Endothelial cell of umbilical vein (primary cell): ENCODE measurements at regions of chr6 and their contacts with region 1.

Region 1: DNA sequence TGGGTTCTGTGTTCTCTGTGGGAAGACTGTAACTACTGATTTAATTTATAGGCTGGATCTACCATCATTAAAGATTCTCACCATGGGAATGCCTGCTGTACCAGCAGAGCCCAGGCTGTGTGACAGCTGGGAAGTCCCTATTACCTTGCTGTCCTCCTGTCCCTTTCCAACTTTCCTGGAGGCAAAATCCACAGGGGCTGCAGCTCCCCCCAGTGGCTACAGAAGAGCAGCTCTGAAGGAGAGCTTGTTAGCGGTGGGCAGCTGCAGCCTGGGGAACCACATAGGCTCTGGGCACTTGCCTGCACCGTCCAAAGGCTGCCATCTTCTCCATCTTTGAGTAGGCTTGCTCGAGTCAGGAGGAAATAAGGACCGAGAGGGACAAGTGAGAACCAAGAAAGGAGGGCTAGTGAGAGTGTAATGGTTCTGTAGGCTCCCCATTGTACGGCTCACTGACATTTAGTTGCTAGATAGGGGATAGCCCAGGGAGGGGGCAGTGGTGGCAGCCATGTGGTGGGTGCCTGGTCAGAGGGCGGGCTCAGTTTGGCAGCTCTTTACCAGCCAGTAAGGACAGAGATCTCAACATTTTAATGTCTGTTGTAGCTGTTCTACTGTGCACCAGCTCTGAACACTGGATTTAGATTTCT is 155.1 kb upstream of the MLIP start:
- DNase-seq: peak; percentile 83
- H3K4me3 ChIP-seq: no peak overlapping the region
- H3K27ac ChIP-seq: no peak overlapping the region
- H3K4me1 ChIP-seq: no peaks in the 10 kb centered on the region
- H3K27me3 ChIP-seq: no peaks in the 10 kb centered on the region
- CTCF ChIP-seq: peak; percentile 62 to 92
- POLR2A ChIP-seq: no peak

Region 2: GRCh38 chr6:53725791-53726431 is 230.3 kb before region 1 on chr6:
- CTCF ChIA-PET with region 1: interaction called, 291 read pairs
- POLR2A ChIA-PET with region 1: no interaction called
- dilution Hi-C with region 1: no loop called
- intact Hi-C with region 1: loop called (anchors 1 kb)
- DNase-seq: peak; percentile 70
- H3K4me3 ChIP-seq: no peak overlapping the region
- H3K27ac ChIP-seq: no peak overlapping the region
- H3K4me1 ChIP-seq: no peaks in the 10 kb centered on the region
- H3K27me3 ChIP-seq: no peaks in the 10 kb centered on the region
- CTCF ChIP-seq: peak; percentile 91 to 98
- POLR2A ChIP-seq: no peak

Region 3: GRCh38 chr6:53761036-53761435 is 195.2 kb before region 1 on chr6:
- CTCF ChIA-PET with region 1: interaction called, 18 read pairs
- POLR2A ChIA-PET with region 1: no interaction called
- dilution Hi-C with region 1: no loop called
- intact Hi-C with region 1: no loop called
- DNase-seq: no peak
- H3K4me3 ChIP-seq: no peak overlapping the region
- H3K27ac ChIP-seq: no peak overlapping the region
- H3K4me1 ChIP-seq: no peaks in the 10 kb centered on the region
- H3K27me3 ChIP-seq: no peaks in the 10 kb centered on the region
- CTCF ChIP-seq: no peak
- POLR2A ChIP-seq: no peak

Region 4: GRCh38 chr6:53794720-53795253 is 161.4 kb before region 1 on chr6 and contains the start of gene LRRC1:
- CTCF ChIA-PET with region 1: interaction called, 319 read pairs
- POLR2A ChIA-PET with region 1: interaction called, 18 read pairs
- dilution Hi-C with region 1: no loop called
- intact Hi-C with region 1: loop called (anchors 1 kb)
- DNase-seq: peak; percentile 95
- H3K4me3 ChIP-seq: peak within 1 kb of the TSS; percentile 58 to 76 (median 72)
- H3K27ac ChIP-seq: peak within 1 kb of the TSS; percentile 43
- H3K4me1 ChIP-seq: peaks cover 25% of the 10 kb centered on the region
- H3K27me3 ChIP-seq: no peaks in the 10 kb centered on the region
- CTCF ChIP-seq: no peak
- POLR2A ChIP-seq: peak; percentile 83
- total RNA-seq, gene LRRC1: 10.6 and 11.7 TPM in 2 replicates

Region 5: GRCh38 chr6:53869952-53870351 is 86.2 kb before region 1 on chr6:
- CTCF ChIA-PET with region 1: interaction called, 5 read pairs
- POLR2A ChIA-PET with region 1: no interaction called
- dilution Hi-C with region 1: no loop called
- intact Hi-C with region 1: loop called (anchors 5 kb)
- DNase-seq: peak; percentile 93
- H3K4me3 ChIP-seq: no peak overlapping the region
- H3K27ac ChIP-seq: no peak overlapping the region
- H3K4me1 ChIP-seq: peaks cover 8% of the 10 kb centered on the region
- H3K27me3 ChIP-seq: no peaks in the 10 kb centered on the region
- CTCF ChIP-seq: no peak
- POLR2A ChIP-seq: no peak

Region 6: DNA sequence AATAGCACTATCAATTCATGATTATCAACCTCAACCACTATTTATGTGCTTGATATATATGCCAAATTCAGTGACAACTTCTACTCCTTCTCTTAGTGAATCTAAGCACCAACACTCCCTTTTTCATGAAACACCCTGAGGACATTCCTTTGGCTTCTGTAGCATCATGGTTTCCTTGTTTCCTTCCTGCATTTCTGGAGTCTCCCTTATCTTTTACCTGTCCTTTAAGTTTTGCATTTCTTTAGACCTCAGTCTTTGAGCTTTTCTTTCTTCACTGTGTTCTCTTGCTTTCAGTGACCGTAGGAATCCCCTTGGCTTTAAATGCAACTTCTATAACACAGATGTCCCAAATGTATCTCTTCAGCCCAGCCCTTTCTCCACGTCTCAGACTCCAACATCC is 11.2 kb after region 1 on chr6:
- CTCF ChIA-PET with region 1: interaction called, 20 read pairs
- POLR2A ChIA-PET with region 1: no interaction called
- dilution Hi-C with region 1: no loop called
- intact Hi-C with region 1: no loop called
- DNase-seq: no peak
- H3K4me3 ChIP-seq: no peak overlapping the region
- H3K27ac ChIP-seq: no peak overlapping the region
- H3K4me1 ChIP-seq: no peaks in the 10 kb centered on the region
- H3K27me3 ChIP-seq: no peaks in the 10 kb centered on the region
- CTCF ChIP-seq: no peak
- POLR2A ChIP-seq: no peak

Region 7: GRCh38 chr6:54037277-54037779 is 81.1 kb after region 1 on chr6:
- CTCF ChIA-PET with region 1: no interaction called
- POLR2A ChIA-PET with region 1: no interaction called
- dilution Hi-C with region 1: no loop called
- intact Hi-C with region 1: no loop called
- DNase-seq: no peak
- H3K4me3 ChIP-seq: no peak overlapping the region
- H3K27ac ChIP-seq: no peak overlapping the region
- H3K4me1 ChIP-seq: no peaks in the 10 kb centered on the region
- H3K27me3 ChIP-seq: no peaks in the 10 kb centered on the region
- CTCF ChIP-seq: no peak
- POLR2A ChIP-seq: no peak

Region 8: DNA sequence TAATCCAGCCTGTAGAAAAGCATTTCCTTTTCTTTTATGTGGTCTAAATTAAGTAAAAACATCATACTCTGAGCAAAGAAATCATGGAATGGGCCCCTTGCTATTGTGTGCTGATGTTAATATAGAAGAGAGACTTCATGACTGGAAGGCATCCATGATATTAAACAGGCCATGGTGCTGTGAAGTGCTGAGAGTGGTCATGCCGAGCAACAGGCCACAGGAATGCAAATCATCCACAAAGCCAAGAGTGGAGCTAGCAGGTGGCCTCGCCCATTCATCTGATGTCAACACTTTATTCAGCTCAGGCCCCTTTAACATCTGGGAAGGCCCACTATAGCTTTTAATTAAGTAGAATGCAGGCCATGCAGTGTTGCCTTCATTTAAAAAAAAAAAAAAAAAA is 1738.0 kb after region 1 on chr6:
- CTCF ChIA-PET with region 1: no interaction called
- POLR2A ChIA-PET with region 1: no interaction called
- dilution Hi-C with region 1: no loop called
- intact Hi-C with region 1: no loop called
- DNase-seq: no peak
- H3K4me3 ChIP-seq: no peak overlapping the region
- H3K27ac ChIP-seq: no peak overlapping the region
- H3K4me1 ChIP-seq: peaks cover 4% of the 10 kb centered on the region
- H3K27me3 ChIP-seq: no peaks in the 10 kb centered on the region
- CTCF ChIP-seq: no peak
- POLR2A ChIP-seq: no peak